ENCODE measurements at regions of chr1 and their contacts with region 1.

Region 1: DNA sequence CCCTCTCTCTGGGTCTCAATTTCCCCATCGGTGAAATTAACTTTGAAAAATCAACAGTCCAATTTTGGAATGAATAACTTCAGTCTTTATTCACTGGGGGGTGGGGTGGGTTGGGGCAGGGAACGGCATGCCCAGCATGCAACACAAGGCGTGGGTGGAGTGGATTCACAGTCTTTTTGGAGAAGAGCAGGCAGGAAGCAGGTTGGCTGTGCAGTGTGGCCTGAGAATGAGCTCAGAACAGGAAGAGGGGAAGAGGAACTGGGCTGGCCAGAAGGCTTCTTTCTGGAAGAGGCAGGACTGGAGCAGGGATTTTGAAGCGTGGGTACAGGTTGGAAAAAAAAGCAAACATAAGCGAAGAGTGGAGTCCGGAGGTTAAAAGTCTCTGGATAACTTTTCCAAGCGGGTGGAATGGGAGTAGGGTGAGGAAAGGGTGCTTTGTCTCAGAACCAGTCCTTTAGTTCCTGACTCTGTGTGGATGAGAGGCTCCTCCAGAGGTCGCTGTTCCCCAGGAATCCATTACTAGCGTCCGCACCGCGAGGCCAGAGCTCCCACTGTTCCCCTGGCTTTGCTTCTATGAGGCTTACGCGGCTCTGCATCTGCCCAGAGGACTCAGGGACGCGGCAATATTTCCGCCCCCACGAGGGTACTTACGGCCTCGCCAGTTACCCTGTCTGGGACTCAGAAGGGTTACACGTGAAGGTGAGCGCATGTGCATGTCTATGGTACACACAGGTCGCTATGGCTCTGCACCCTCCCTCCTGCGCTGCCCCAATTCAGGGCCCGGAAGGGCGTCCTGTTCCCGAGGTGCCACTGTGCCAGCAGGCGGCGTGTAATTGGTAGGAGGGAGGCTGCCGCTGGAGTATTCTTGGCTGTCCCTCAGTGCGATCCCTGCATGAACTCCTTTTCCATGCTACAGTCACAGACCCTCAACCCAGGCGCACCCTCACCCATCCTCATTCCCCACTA is 5.5 kb upstream of the FOXD2 start:
- DNase-seq: no peak
- ATAC-seq: peak; percentile 78

Region 2: GRCh38 chr1:47725992-47726855 is 293.9 kb after region 1 on chr1:
- intact Hi-C with region 1: loop called (anchors 5 kb)
- DNase-seq: no peak
- ATAC-seq: peak; percentile 87

Region 3: DNA sequence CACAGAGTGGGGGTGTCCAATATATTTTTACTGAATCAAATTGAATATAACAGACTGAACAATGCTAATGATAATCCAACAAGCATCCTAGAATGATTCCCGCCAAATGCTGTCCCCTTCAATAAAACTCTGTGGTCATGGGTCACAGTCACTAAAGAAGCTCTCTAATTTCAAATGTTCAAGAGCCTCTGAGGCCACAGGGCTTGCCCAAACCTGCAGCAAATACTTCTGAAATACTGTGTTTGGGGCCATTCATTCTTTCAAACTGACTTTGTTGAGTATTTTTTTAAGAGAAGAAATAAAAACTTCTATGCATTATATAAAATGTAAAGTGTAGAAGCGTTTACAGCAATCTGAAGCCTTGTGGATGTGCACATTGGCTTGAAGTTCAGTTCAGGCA is 1351.9 kb after region 1 on chr1:
- intact Hi-C with region 1: loop called (anchors 5 kb)
- DNase-seq: no peak
- ATAC-seq: no peak